ENCODE measurements at regions of chr21 and their contacts with region 1.

Region 1: DNA sequence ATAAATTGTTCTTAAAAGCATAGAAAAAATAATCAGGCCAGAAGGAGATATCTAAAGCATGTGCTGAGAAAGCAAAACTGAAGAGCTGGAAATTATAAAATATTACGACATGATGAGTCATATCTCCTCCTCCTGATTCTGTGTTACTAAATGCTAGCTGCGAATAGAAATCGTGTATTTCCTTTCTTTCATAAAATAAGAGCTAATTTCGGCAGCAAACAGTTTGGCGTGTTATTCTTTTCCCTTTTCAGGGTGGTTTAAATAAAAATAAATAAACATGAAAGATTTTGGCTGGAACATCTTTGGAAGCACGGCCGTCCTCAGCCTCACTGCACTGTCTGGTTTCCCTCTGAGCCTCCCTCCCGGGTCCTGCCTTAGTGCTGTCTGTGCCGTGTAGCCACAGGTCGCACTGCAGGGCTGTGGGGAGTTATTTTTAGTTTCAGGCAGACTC is 56.0 kb downstream of the ADARB1 start:
- DNase-seq: no peak

Region 2: GRCh38 chr21:44949779-44950198 is 180.6 kb before region 1 on chr21:
- intact Hi-C with region 1: loop called (anchors 2 kb)
- DNase-seq: peak; percentile 94

Region 3: DNA sequence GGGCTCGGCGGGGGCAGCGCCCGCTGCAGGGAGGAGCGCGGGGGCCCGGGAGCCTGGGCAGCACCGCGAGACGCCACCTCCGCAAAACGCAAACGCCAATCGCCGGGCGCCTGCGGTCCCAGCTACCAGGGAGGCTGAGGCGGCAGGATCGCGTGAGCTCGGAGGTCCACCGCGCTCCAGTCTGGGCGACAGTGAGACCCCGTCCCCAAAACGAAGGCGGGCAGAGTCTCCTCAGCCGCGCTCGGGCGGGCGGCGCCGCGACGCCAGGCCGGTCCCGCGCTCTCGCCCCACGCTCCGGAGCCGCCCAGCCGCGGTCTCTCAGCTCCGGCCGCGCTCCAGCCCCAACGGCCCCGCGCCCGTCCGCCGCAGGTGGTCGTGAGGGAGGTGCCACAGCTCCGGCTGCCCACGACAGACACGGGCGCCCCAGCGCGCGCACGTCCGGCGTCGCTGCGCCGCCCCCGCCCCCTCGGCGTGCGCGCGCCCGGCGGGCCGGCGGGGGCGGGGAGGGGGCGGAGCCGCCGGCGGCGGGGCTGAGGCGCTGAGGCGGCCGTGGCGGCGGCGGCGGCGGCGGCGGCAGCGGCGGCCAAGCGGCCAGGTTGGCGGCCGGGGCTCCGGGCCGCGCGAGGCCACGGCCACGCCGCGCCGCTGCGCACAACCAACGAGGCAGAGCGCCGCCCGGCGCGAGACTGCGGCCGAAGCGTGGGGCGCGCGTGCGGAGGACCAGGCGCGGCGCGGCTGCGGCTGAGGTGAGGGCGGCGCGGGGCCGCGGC is 56.1 kb before region 1 on chr21 and contains the start of gene ADARB1:
- intact Hi-C with region 1: loop called (anchors 2 kb)
- DNase-seq: peak; percentile 85
- total RNA-seq, gene ADARB1: 13.7 TPM

Measured in cardiac septum (tissue), 1 donor.